Left ventricle myocardium inferior (tissue), 1 donor: ENCODE measurements at regions of chr4 and their contacts with region 1.

Region 1: DNA sequence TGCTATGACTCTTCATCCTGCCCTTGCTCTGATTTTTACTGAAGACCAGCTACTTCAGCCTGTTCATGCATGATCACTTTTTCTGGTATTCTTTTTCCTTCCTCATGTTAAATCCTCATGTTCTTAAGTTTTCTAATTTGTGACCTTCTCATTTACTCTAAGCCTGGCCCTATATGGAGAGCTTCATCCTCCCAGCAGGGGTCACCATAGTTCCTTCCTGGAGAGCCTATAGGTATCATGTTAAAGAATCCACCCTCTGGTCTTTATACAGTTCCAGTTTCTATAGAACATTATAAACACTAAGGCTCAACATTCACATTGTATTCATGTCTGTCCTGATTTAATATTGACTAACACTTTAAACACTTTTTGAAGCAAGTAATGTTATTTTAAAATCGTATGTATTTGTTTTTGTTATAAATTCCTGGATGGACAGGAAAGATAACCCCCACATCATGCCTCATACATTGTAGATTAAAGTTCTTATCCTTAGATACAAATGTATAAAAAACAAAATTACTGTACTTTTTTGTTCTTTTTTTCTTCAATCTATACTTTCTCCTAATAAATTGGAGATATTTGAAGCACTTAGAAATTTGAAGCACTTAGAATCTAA is 53.8 kb upstream of the OTUD4 start:
- DNase-seq: no peak
- H3K4me3 ChIP-seq: no peak overlapping the region
- H3K27ac ChIP-seq: no peak overlapping the region
- H3K4me1 ChIP-seq: no peaks in the 10 kb centered on the region
- H3K27me3 ChIP-seq: no peaks in the 10 kb centered on the region
- CTCF ChIP-seq: peak; percentile 84

Region 2: GRCh38 chr4:145436796-145437195 is 202.6 kb after region 1 on chr4:
- intact Hi-C with region 1: no loop called
- DNase-seq: no peak
- H3K4me3 ChIP-seq: no peak overlapping the region
- H3K27ac ChIP-seq: no peak overlapping the region
- H3K4me1 ChIP-seq: peaks cover 19% of the 10 kb centered on the region
- H3K27me3 ChIP-seq: no peaks in the 10 kb centered on the region
- CTCF ChIP-seq: no peak

Region 3: GRCh38 chr4:145557720-145558119 is 323.5 kb after region 1 on chr4:
- intact Hi-C with region 1: loop called (anchors 5 kb)
- DNase-seq: peak; percentile 41
- H3K4me3 ChIP-seq: no peak overlapping the region
- H3K27ac ChIP-seq: no peak overlapping the region
- H3K4me1 ChIP-seq: peaks cover 6% of the 10 kb centered on the region
- H3K27me3 ChIP-seq: no peaks in the 10 kb centered on the region
- CTCF ChIP-seq: peak; percentile 95